ENCODE measurements at regions of chrX and their contacts with region 1.

Region 1: DNA sequence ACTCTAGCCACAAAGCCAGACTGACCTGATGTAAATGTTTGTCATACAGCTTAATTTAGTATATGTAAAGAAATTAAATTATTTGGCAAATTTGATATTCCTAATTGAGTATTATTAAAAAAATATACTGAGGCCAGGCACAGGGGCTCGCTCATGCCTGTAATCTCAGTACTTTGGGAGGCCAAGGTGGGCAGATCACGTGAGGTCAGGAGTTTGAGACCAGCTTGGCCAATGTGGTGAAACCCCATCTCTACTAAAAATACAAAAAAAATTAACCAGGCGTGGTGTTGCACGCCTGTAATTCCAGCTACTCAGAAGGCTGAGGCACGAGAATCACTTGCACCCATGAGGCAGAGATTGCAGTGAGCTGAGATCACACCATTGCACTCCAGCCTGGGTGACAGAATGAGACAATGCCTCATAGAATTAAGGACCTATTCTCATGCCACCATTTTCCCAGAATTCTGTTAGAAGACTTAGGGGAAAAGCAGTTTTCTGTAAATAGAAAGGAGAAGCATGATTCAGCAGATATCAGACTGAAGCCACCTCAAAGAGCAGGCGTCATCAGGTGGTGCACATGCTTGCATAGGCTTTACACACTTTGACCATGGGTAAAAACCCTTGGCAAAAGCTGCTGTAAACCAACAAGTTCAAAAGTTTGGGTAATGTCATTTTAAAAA is 6.1 kb downstream of the UBQLN2 start:
- DNase-seq: no peak
- H3K4me3 ChIP-seq: no peak overlapping the region
- H3K27ac ChIP-seq: no peak overlapping the region
- H3K4me1 ChIP-seq: peaks cover 9% of the 10 kb centered on the region; the same call in 1 of the 2 replicates
- H3K27me3 ChIP-seq: no peaks in the 10 kb centered on the region
- CTCF ChIP-seq: no peak

Region 2: DNA sequence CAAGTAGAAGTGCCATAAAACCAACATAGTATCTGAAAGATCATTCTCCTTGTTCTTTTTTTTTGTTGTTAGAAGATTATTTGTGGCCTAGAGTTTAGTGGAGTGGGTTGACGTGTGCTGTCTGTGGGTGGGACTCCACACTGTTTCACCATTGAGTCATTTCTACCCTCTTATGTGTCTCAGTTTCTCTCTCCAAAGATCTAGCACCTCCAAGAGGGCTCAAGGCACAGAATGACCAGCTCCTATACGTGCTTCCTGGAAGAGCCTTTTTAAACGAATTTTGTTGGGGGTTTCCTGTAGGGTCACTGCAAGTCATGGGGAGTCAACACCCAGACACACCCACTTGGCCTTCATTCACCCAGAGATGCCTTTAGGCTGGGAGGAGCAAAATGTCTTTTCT is 187.2 kb before region 1 on chrX:
- CTCF ChIA-PET with region 1: no interaction called
- POLR2A ChIA-PET with region 1: no interaction called
- intact Hi-C with region 1: loop called (anchors 5 kb)
- DNase-seq: no peak
- H3K4me3 ChIP-seq: no peak overlapping the region
- H3K27ac ChIP-seq: no peak overlapping the region
- H3K4me1 ChIP-seq: no peaks in the 10 kb centered on the region
- H3K27me3 ChIP-seq: no peaks in the 10 kb centered on the region
- CTCF ChIP-seq: no peak

Measured in PC-9 (cell line).